OCI-LY7 (cell line): ENCODE measurements at regions of chr5 and their contacts with region 1.

Region 1: GRCh38 chr5:10607666-10608073 is 43.8 kb downstream of the ANKRD33B start:
- DNase-seq: peak; percentile 77
- H3K4me3 ChIP-seq: peak overlapping the region; percentile 62
- H3K27ac ChIP-seq: peak overlapping the region; percentile 98
- H3K4me1 ChIP-seq: peaks cover 78% of the 10 kb centered on the region
- CTCF ChIP-seq: peak; percentile 59

Region 2: GRCh38 chr5:10452768-10453331 is 154.8 kb before region 1 on chr5:
- CTCF ChIA-PET with region 1: interaction called, 3 read pairs
- POLR2A ChIA-PET with region 1: interaction called, 5 read pairs
- intact Hi-C with region 1: loop called (anchors 1 kb)
- DNase-seq: peak; percentile 82
- H3K4me3 ChIP-seq: no peak overlapping the region
- H3K27ac ChIP-seq: no peak overlapping the region
- H3K4me1 ChIP-seq: peaks cover 5% of the 10 kb centered on the region
- CTCF ChIP-seq: peak; percentile 94

Region 3: DNA sequence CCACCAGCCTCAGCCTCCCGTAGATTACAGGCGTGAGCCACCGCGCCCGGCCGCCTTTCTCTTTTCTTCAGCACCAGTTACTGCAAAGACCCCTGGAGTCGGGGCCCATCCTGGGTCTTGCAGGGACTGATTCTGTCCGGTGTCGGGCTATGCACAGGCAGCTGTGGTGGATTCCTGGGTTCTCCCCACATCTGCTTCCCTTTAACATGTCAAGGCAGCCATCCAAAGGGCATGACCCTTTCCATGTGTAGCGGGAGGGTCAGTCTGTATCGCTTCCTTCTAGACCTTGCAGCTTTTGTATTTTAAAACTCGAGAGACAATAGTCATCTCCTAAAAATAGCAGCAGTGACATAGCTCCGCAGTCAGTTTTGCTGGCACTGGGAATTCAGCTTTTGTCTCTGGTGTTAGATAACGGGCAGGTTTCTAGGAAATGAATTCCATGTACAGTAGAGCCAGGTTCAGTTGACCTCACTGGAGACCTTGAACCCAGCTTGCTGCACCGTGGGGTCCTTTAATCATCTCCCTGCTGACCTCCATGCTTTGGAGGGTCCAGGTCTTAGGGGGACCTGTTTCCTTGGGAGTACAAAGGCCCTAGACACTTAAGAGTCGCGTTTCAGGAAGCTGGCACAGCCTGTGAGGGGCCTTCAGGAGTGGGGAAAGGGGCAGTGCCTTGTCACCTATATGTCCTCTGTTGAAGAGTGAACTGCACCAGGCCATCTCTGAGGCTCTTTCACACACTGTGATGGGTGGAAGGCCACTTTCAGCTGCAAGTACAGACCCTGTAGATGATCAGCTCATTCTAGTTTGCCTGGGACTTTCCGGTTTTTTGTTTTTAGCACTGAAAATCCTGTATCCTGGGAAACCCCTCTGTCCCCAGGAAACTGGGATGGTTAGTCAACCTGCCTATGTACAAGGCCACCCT is 30.0 kb before region 1 on chr5:
- CTCF ChIA-PET with region 1: no interaction called
- POLR2A ChIA-PET with region 1: interaction called, 6 read pairs
- intact Hi-C with region 1: loop called (anchors 2 kb)
- DNase-seq: no peak
- H3K4me3 ChIP-seq: no peak overlapping the region
- H3K27ac ChIP-seq: peak overlapping the region; percentile 61
- H3K4me1 ChIP-seq: peaks cover 71% of the 10 kb centered on the region
- CTCF ChIP-seq: no peak

Region 4: DNA sequence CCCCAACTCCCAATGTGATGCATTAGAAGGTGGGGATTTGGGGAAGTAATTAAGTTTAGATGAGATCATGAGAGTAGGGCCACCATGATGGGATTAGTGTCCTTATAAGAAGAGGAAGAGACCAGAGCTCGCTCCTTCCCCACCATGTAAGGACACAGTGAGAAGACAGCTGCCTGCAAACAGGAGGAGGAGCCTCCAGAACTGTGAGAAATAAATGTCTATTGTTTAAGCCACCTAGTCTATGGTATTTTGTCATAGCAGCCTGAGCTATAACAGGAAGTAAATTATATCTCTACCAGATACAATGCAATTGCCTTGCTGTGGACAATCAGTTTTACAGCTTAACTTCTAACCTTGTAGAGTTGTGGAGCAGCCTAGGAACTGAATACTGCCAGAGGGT is 14.2 kb after region 1 on chr5:
- CTCF ChIA-PET with region 1: interaction called, 20 read pairs
- POLR2A ChIA-PET with region 1: interaction called, 35 read pairs
- intact Hi-C with region 1: loop called (anchors 1 kb)
- DNase-seq: no peak
- H3K4me3 ChIP-seq: no peak overlapping the region
- H3K27ac ChIP-seq: no peak overlapping the region
- H3K4me1 ChIP-seq: peaks cover 37% of the 10 kb centered on the region
- CTCF ChIP-seq: no peak

Region 5: DNA sequence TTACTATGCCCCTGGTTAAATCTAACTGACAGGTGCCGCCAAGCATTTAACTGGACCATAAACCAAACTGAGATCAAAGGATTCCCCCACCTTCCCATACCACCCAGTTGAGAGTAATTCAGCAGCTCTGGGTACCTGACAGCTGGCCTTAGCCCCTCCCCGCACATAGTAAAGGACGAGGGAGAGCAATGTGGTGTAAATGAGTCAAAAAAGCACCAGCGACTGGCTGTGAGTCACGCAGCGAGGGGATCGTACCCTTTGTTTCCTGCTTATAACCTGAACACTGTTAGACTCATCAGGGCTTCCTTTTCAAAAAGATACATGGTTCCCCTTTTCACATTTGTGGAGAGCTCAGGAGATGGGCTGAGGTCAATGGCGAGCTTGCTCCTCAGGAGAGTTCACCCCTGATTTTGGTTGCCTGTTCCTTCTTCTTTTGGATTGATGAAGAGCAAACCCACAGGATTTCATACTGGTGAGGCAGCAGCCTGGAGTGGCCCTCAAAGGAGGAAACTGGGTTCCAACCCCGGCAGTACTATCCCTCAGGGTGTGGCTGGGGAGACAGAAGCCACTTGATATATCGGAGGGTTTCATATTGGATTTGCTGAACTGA is 27.7 kb after region 1 on chr5:
- CTCF ChIA-PET with region 1: no interaction called
- POLR2A ChIA-PET with region 1: interaction called, 11 read pairs
- intact Hi-C with region 1: no loop called
- DNase-seq: peak; percentile 59
- H3K4me3 ChIP-seq: no peak overlapping the region
- H3K27ac ChIP-seq: peak overlapping the region; percentile 14
- H3K4me1 ChIP-seq: peaks cover 53% of the 10 kb centered on the region
- CTCF ChIP-seq: no peak

Region 6: DNA sequence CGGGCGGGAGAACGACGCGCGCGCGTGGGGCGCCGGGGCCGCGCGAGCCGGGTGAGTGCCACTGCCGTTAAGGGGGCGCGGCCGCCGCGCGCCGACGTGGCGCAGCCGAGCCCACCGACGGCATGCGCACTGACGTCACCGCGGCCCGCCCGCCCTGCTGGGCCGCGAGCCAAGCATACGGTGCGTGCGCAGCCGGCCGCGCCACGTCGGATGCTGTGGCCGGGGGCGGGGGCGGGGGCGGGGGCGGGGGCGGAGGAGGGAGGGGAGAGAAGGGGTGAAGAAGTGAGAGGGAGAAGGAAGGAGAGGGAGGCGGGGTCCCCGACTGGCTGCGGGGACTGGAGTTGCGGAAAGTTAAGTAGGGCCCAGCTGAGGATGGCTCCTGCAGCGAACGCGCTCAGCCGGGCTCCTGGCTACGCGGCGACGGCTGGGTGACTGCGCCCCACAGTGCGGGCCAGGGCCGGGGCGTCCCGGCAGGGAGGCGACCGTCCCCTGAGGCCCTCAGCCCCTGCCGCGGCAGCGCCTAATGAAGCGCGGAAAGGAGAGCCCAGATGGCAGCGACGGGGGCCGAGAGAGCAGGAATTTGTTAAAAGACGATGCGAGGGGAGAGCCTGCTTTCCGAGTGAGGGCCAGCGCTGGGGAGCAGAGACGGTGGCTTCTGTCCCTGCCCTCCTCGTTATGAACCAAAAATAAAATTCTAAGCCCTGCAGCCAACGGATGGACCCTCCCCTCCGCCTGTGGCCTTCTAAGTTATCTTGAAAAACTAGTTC is 153.7 kb after region 1 on chr5 and contains the start of gene DAP:
- CTCF ChIA-PET with region 1: no interaction called
- POLR2A ChIA-PET with region 1: no interaction called
- intact Hi-C with region 1: loop called (anchors 1 kb)
- DNase-seq: peak; percentile 95
- H3K4me3 ChIP-seq: peak within 1 kb of the TSS; percentile 85
- H3K27ac ChIP-seq: peak within 1 kb of the TSS; percentile 75
- H3K4me1 ChIP-seq: peaks cover 44% of the 10 kb centered on the region
- CTCF ChIP-seq: no peak
- total RNA-seq, gene DAP: 15.9 and 21.5 TPM in 2 replicates